ENCODE measurements at regions of chr6 and their contacts with region 1.

Region 1: DNA sequence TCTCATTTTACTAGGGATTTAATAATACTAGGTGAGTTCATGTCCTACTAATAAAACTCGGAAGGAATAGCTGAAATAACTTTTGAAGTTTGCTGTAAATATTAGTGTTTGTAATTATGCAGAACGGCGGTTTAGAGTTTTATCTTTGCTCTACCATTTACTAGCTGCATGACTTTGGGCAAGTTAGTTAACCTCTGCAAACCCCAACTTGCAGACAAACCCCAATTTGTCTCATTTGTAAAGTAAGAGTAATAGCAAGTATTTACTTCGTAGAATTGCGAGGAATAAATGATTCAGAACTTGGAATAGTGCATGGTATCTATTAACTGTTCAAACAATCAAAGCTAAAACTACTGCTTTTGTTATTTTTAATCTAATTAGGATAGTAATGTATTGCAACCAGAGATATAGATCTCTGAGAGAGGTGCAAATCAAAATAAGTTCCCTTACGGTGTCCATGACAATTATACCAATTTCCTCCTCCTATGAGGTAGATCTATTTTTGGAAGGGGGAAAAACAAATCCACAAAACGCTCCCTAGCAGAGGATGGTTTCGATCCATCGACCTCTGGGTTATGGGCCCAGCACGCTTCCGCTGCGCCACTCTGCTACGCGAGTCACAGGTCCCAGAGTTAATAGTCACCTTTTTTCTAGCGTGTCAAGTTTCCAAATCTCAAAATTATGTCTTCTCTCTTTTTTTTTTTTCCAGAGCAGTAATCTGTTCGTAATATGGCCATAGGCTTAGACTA is 35.1 kb upstream of the BTN3A2 start:
- DNase-seq: no peak
- CTCF ChIP-seq: no peak

Region 2: DNA sequence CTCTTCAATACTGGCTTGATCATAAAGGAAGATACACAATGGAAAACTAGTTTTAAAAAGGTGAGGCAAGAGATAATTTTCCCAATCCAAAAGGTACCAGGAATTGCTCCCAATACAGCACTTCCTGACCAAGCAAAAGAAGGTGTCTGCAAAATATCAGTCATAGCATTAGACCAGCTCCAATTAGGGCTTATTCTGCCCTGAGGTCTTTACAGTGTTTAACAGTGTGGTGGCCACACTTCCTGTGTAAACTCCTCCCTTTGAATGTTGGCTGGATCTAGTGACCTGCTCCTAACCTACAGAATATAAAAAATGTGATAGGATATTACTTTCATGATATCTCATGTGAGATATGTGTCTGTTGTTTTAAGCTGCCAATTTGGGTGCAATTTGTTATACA is 22.1 kb before region 1 on chr6:
- CTCF ChIA-PET with region 1: no interaction called
- POLR2A ChIA-PET with region 1: no interaction called
- DNase-seq: no peak
- CTCF ChIP-seq: no peak

Region 3: GRCh38 chr6:26342106-26343004 is 12.4 kb after region 1 on chr6:
- CTCF ChIA-PET with region 1: interaction called, 12 read pairs
- POLR2A ChIA-PET with region 1: no interaction called
- DNase-seq: no peak
- CTCF ChIP-seq: no peak

Region 4: DNA sequence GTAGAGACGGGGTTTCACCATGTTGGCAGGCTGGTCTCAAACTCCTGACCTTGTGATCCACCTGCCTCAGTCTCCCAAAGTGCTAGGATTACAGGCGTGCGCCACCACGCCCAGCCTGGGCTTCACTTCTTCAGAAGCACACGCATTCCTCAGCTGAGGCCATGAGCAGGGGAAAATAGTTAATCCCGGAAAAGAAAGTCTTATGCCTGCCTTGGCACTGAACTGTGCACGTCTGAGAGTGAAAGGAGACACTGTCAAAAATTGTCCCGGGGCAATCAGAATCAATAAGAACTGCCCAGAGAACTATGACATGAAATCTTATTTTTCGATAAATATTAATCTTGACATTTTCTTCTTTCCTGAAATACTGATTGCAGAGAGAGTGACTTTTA is 55.8 kb after region 1 on chr6:
- CTCF ChIA-PET with region 1: no interaction called
- POLR2A ChIA-PET with region 1: no interaction called
- DNase-seq: no peak
- CTCF ChIP-seq: no peak